HEK293T (cell line): ENCODE measurements at regions of chr10 and their contacts with region 1.

Region 1: DNA sequence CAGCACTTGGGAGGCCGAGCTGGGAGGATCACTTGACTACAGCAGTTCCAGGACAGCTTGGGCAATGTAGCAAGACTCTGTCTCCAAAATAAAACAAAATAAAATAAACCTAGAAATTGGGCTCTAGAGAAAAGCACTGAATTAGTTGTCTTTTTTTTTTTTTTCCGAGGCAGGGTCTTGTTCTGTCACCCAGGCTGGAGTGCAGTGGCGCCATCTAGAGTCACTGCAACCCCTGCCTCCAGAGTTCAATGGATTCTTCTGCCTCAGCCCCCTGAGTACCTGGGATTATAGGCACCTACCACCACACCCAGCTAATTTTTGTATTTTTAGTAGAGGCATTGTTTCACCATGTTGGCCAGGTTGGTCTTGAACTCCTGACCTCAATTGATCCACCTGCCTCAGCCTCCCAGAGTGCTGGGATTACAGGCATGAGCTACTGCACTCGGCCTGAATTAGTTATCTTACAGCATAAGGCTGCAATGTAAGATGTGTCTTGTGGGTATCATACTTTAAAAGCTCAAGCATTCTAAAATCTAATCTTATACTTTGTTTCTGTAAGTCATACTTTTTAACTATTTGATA is 12.8 kb downstream of the MEIG1 start:
- DNase-seq: no peak

Region 2: GRCh38 chr10:14945091-14945490 is 26.9 kb before region 1 on chr10:
- CTCF ChIA-PET with region 1: no interaction called
- POLR2A ChIA-PET with region 1: no interaction called
- DNase-seq: no peak

Region 3: GRCh38 chr10:14959276-14960057 is 12.5 kb before region 1 on chr10 and contains the start of gene MEIG1:
- CTCF ChIA-PET with region 1: interaction called, 9 read pairs
- POLR2A ChIA-PET with region 1: interaction called, 15 read pairs
- DNase-seq: peak; percentile 93